CD4-positive, alpha-beta T cell (primary cell): ENCODE measurements at regions of chr15 and their contacts with region 1.

Region 1: GRCh38 chr15:28935326-28935725 is 49.6 kb downstream of the APBA2 start:
- DNase-seq: peak in 13 of 14 experiments; percentile 23 to 67 (median 49)
- ATAC-seq: peak; percentile 32
- H3K4me3 ChIP-seq: no peak overlapping the region
- H3K4me3 Mint-ChIP-seq: peak overlapping the region; percentile 63
- H3K27ac ChIP-seq: no peak overlapping the region
- H3K27ac Mint-ChIP-seq: peak overlapping the region; percentile 93
- H3K4me1 ChIP-seq: peaks cover 73% of the 10 kb centered on the region
- H3K4me1 Mint-ChIP-seq: peaks cover 75% of the 10 kb centered on the region
- H3K27me3 ChIP-seq: no peaks in the 10 kb centered on the region
- H3K27me3 Mint-ChIP-seq: no peaks in the 10 kb centered on the region
- CTCF ChIP-seq: peak; percentile 58

Region 2: DNA sequence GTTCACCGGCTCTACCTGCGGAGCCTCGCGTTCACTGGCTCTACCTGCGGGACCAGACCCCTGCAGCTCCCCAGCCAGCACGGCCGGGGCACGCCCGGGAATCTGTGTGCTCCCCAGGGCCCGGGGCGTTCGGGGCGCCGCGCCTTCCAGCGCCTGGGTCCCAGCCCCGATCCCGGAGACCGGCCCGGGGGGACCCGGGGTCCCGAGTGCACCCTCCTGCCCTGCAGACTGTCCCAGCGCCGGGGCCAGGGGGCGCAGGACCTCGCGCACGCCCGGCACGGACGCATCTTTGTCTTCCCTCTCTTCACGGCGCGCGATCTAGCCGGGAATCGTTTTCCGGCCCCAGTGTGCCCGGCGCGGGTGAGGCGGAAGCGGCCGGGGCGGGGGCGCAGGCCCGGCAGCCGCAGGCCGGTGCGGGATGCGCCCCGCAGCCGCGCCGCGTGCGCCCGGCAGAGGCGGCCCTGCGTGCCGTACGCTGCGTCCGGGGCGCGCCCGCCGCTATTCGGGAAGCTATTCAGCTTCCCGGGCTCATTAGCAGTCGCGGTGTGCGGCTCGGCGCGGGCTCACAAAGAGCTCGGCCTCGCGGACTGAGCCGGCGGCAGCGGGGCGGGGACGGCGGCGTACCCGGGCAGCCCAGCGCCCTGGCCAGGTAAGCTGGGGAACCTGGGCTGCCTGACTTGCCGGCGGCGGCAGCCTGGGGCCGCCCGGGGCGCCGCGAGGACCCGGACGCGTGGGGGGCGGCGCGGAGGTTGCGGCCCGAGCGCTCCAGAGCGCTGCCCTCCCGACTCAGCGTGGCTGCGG is 49.5 kb before region 1 on chr15 and contains the start of gene APBA2:
- CTCF ChIA-PET with region 1: interaction called, 4 read pairs
- POLR2A ChIA-PET with region 1: interaction called, 15 read pairs
- intact Hi-C with region 1: loop called (anchors 2 to 5 kb)
- DNase-seq: peak; percentile 27 to 77 (median 48)
- ATAC-seq: peak; percentile 59
- H3K4me3 ChIP-seq: peak within 1 kb of the TSS; percentile 73
- H3K4me3 Mint-ChIP-seq: peak within 1 kb of the TSS; percentile 90
- H3K27ac ChIP-seq: peak within 1 kb of the TSS; percentile 30 to 44
- H3K27ac Mint-ChIP-seq: peak within 1 kb of the TSS; percentile 99
- H3K4me1 ChIP-seq: peaks cover 57% of the 10 kb centered on the region
- H3K4me1 Mint-ChIP-seq: peaks cover 39% of the 10 kb centered on the region
- H3K27me3 ChIP-seq: peaks cover 0 to 2% of the 10 kb centered on the region in 2 experiments
- H3K27me3 Mint-ChIP-seq: no peaks in the 10 kb centered on the region
- CTCF ChIP-seq: peak; percentile 34
- total RNA-seq, gene APBA2: 123 to 126 TPM

Region 3: DNA sequence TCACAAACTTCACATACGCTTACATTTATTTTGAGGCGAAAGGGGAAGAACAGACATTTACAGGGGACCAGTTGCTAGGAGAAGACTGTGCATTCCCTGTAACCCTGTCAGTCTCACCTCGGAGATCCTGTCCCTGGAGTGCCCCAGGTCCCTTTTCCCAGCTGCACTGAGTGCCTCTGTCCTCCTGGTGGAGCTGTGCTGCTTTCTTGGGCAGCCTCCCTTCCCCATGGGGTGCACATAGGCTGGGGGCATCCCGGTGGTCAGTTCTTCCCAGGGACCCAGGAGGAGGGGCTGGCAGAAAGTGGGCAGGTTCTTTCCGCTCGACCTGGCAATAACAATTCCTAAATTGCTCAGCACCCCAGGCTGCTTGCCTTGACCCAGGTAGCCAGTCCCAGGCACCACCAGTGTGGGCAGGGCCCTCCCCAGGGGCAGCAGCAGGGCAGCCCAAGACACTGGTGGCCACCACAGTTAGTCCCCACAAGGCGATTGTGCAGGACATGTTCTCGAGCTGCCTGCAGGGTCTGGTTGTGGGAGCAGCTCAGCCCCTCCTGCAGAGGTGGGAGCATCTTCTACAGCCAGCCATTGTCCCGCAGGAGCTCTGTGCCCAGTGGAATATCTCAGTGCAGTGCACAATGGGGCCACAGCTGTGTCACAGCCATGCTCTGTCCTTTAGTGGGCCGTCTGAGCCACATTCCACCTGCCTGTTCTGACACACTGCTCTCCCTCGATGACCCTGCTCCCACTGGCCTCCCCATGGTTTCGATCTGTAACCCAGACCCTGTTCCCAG is 13.2 kb before region 1 on chr15:
- CTCF ChIA-PET with region 1: no interaction called
- POLR2A ChIA-PET with region 1: interaction called, 7 read pairs
- intact Hi-C with region 1: loop called in 1 of 2 experiments (anchors 1 kb)
- DNase-seq: no peak
- ATAC-seq: no peak
- H3K4me3 ChIP-seq: no peak overlapping the region
- H3K4me3 Mint-ChIP-seq: peak overlapping the region; percentile 83
- H3K27ac ChIP-seq: no peak overlapping the region
- H3K27ac Mint-ChIP-seq: peak overlapping the region; percentile 84
- H3K4me1 ChIP-seq: peaks cover 64% of the 10 kb centered on the region
- H3K4me1 Mint-ChIP-seq: peaks cover 82% of the 10 kb centered on the region
- H3K27me3 ChIP-seq: no peaks in the 10 kb centered on the region
- H3K27me3 Mint-ChIP-seq: no peaks in the 10 kb centered on the region
- CTCF ChIP-seq: no peak

Region 4: DNA sequence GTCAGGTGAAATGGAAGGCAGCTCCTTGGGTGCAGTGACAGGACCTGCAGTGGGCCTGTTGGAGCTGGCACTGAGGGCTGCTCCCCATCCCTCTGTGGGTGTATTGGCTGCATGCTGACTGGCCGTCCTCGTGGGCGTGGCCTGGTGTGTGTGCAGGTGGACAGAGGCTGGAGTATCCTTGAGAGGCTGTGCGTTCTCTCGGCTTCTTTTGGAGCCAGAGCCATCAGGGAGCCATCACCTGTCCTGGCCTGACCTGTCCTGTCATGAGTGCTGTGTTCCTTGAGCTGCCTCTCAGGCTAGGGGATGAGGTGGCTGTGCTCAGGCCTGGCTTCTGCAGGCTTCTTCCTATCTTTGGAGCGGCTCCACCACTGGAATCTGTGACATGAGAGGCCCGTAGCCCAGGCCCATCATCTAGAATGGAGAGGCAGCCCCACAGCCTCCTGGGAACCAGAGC is 11.9 kb after region 1 on chr15:
- CTCF ChIA-PET with region 1: interaction called, 4 read pairs
- POLR2A ChIA-PET with region 1: interaction called, 13 read pairs
- intact Hi-C with region 1: loop called in 1 of 2 experiments (anchors 1 kb)
- DNase-seq: no peak
- ATAC-seq: no peak
- H3K4me3 ChIP-seq: no peak overlapping the region
- H3K4me3 Mint-ChIP-seq: peak overlapping the region; percentile 86
- H3K27ac ChIP-seq: peak overlapping the region; percentile 29 to 39
- H3K27ac Mint-ChIP-seq: peak overlapping the region; percentile 93
- H3K4me1 ChIP-seq: peaks cover 80% of the 10 kb centered on the region
- H3K4me1 Mint-ChIP-seq: peaks cover 87% of the 10 kb centered on the region
- H3K27me3 ChIP-seq: no peaks in the 10 kb centered on the region
- H3K27me3 Mint-ChIP-seq: no peaks in the 10 kb centered on the region
- CTCF ChIP-seq: no peak

Region 5: DNA sequence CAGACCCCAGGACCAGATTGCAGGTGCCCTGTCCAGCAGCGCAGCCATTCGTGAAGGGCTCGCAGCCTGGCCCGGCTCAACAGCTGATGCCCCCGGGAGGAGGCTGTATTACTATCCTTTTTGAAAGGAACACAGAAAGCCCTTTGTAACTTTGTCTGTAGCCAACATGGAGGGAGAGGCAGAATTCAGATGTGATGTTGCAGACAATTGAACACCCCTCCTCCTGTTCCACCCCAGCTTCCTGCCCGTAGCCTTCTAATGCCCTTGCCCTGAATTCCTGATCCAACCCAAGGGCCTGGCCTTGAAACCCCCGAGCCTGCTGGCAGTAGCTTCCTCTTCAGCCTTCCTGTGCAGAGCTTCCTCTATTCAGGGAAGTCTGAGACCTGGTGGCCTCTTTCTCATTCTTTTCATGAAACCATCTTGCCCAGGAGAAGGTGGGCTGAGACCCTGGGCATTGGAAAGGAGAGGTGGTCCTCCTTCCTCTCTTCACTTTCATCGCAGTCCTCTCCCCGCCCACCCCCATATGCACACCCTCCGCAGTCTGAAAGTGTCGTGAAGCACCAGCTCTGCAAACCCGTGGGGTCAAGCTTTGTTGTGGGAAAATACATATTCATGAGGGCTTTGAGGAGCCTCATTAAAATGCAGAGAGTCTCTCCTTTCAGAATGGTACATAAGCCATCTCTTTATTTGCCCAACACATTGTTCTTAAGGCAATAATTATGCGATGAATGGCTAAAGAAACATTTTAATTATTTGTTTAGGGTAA is 59.7 kb after region 1 on chr15:
- CTCF ChIA-PET with region 1: no interaction called
- POLR2A ChIA-PET with region 1: no interaction called
- intact Hi-C with region 1: no loop called
- DNase-seq: no peak
- ATAC-seq: no peak
- H3K4me3 ChIP-seq: no peak overlapping the region
- H3K4me3 Mint-ChIP-seq: peak overlapping the region; percentile 46
- H3K27ac ChIP-seq: no peak overlapping the region
- H3K27ac Mint-ChIP-seq: peak overlapping the region; percentile 69
- H3K4me1 ChIP-seq: peaks cover 37% of the 10 kb centered on the region
- H3K4me1 Mint-ChIP-seq: peaks cover 69% of the 10 kb centered on the region
- H3K27me3 ChIP-seq: no peaks in the 10 kb centered on the region
- H3K27me3 Mint-ChIP-seq: no peaks in the 10 kb centered on the region
- CTCF ChIP-seq: no peak